Panc1 (cell line): ENCODE measurements at regions of chr6 and their contacts with region 1.

Region 1: DNA sequence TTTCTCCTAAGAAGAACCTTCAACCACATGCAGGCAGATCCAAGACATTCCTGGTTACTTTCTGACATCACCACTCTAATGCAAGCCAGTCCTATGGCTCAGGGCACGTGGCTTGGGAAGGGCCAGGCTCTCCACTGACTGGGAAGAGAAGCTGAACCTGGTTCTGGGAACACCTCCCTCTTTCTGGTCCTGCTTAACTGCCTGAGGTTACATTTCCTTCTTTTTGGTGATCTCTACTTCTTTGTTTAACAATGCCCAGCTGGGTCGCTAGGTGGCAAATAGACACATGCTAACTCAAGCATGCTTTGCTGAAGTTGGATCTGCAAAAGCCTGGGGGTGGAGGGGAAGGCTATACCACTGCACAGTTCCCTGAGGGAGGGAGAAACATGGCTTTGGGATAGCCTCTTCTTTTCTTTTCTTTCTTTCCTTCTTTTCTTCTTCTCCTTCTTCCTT is 249.7 kb downstream of the GMDS start:
- DNase-seq: no peak
- ATAC-seq: no peak
- H3K4me3 ChIP-seq: no peak overlapping the region
- H3K27ac ChIP-seq: no peak overlapping the region
- H3K4me1 ChIP-seq: no peaks in the 10 kb centered on the region
- H3K27me3 ChIP-seq: no peaks in the 10 kb centered on the region
- CTCF ChIP-seq: no peak; the same call in 1 of the 2 replicates

Region 2: GRCh38 chr6:1817033-1817761 is 178.5 kb before region 1 on chr6:
- CTCF ChIA-PET with region 1: no interaction called
- POLR2A ChIA-PET with region 1: interaction called, 10 read pairs
- in situ Hi-C with region 1: no loop called
- intact Hi-C with region 1: no loop called
- DNase-seq: no peak
- ATAC-seq: no peak
- H3K4me3 ChIP-seq: no peak overlapping the region
- H3K27ac ChIP-seq: no peak overlapping the region
- H3K4me1 ChIP-seq: no peaks in the 10 kb centered on the region
- H3K27me3 ChIP-seq: 0 out of 2 replicates have a peak, but pooled peaks cover 2% of the 10 kb centered on the region
- CTCF ChIP-seq: no peak

Region 3: DNA sequence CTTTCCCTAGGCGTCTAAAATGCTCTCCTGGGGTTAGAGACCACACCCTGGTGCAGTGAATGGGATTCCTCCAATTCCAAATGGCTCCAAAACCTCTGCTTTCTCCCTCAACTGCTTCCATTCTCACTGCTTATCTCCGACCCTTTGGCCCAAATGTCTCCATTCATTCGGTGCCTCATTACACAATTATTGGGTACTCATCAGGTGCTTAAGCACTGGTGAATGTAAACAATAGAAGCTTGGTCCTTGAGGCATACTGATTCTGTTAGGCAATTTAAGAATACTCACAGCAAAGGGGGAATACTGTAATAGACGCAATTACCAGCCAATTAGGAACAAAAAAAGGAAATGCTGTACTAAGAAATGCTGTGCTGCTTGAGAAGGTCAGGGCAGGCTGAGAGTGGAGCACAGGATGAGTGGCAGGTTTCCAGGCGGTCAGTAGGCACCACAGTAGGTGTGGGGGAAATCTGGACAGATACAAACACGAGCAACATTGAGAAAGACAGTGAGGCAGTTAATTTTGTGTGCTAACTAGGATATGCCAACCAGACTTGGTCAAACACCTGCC is 226.7 kb after region 1 on chr6:
- CTCF ChIA-PET with region 1: no interaction called
- POLR2A ChIA-PET with region 1: no interaction called
- in situ Hi-C with region 1: no loop called
- intact Hi-C with region 1: no loop called
- DNase-seq: no peak
- ATAC-seq: peak; percentile 69; the same call in 1 of the 2 replicates
- H3K4me3 ChIP-seq: peak overlapping the region; percentile 33 to 49
- H3K27ac ChIP-seq: peak overlapping the region; percentile 4; the same call in 1 of the 2 replicates
- H3K4me1 ChIP-seq: peaks cover 5% of the 10 kb centered on the region; the same call in 1 of the 2 replicates
- H3K27me3 ChIP-seq: no peaks in the 10 kb centered on the region
- CTCF ChIP-seq: no peak